ENCODE measurements at regions of chr19 and their contacts with region 1.

Region 1: GRCh38 chr19:16066611-16067104 is 9.6 kb upstream of the TPM4 start:
- DNase-seq: no peak
- H3K4me3 ChIP-seq: peak overlapping the region in 3 of 4 donors; percentile 73 to 89 (median 82)
- H3K27ac ChIP-seq: peak overlapping the region; percentile 97 to 100 (median 100)
- H3K4me1 ChIP-seq: peaks cover 0 to 36% (median 28%) of the 10 kb centered on the region in 4 donors
- H3K27me3 ChIP-seq: no peaks in the 10 kb centered on the region
- CTCF ChIP-seq: peak in 3 of 4 experiments; percentile 14 to 30 (median 18)
- EP300 ChIP-seq: no peak
- POLR2A ChIP-seq: no peak

Region 2: GRCh38 chr19:16095071-16095571 is 28.5 kb after region 1 on chr19:
- intact Hi-C with region 1: loop called (anchors 1 kb)
- DNase-seq: no peak
- H3K4me3 ChIP-seq: no peak overlapping the region
- H3K27ac ChIP-seq: peak overlapping the region; percentile 66 to 100 (median 86)
- H3K4me1 ChIP-seq: peaks cover 0 to 65% (median 32%) of the 10 kb centered on the region in 4 donors
- H3K27me3 ChIP-seq: no peaks in the 10 kb centered on the region
- CTCF ChIP-seq: no peak
- EP300 ChIP-seq: no peak
- POLR2A ChIP-seq: no peak

Region 3: GRCh38 chr19:16111160-16111908 is 44.7 kb after region 1 on chr19 and contains the start of gene RAB8A:
- intact Hi-C with region 1: loop called (anchors 2 kb)
- DNase-seq: peak; percentile 100
- H3K4me3 ChIP-seq: peak within 1 kb of the TSS; percentile 94 to 99 (median 94)
- H3K27ac ChIP-seq: peak within 1 kb of the TSS; percentile 91 to 96 (median 95)
- H3K4me1 ChIP-seq: peaks cover 0 to 49% (median 42%) of the 10 kb centered on the region in 4 donors
- H3K27me3 ChIP-seq: no peaks in the 10 kb centered on the region
- CTCF ChIP-seq: peak; percentile 89 to 98 (median 96)
- EP300 ChIP-seq: no peak
- POLR2A ChIP-seq: no peak
- total RNA-seq, gene RAB8A: 32.8 to 43.9 (median 34.9) TPM

Region 4: GRCh38 chr19:17966550-17967256 is 1900.0 kb after region 1 on chr19 and contains the start of gene KCNN1:
- intact Hi-C with region 1: no loop called
- DNase-seq: no peak
- H3K4me3 ChIP-seq: peak within 1 kb of the TSS in 2 of 4 donors; percentile 10 to 28
- H3K27ac ChIP-seq: no peak within 1 kb of the TSS
- H3K4me1 ChIP-seq: peaks cover 0 to 7% (median 0%) of the 10 kb centered on the region in 4 donors
- H3K27me3 ChIP-seq: peaks cover 13 to 65% (median 36%) of the 10 kb centered on the region in 3 donors
- CTCF ChIP-seq: no peak
- EP300 ChIP-seq: no peak
- POLR2A ChIP-seq: no peak
- total RNA-seq, gene KCNN1: 0.33 to 0.55 TPM in 2 of 4 donors, not detected in the others

Measured in sigmoid colon (tissue), 7 donors.